ENCODE measurements at regions of chrX and their contacts with region 1.

Region 1: DNA sequence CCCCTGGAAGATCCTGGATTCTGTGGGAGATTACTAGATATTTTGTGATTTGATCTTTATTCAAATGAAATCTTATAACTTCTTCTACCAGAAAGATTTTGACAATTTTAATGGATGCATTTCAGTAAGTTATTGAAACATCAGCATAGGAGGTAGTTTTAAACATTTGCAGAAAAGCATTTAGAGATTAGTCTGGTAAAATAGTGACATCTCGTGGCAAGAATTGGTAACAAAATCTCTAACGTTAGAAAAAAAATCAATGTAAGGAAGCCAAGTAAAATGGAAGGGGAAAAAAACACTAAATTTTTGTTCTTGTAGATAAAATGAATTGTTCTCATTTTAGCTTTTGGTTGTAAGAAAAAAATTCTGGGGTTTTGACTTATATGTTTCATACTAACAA is 73.3 kb downstream of the TASL start:
- DNase-seq: no peak
- ATAC-seq: no peak

Region 2: DNA sequence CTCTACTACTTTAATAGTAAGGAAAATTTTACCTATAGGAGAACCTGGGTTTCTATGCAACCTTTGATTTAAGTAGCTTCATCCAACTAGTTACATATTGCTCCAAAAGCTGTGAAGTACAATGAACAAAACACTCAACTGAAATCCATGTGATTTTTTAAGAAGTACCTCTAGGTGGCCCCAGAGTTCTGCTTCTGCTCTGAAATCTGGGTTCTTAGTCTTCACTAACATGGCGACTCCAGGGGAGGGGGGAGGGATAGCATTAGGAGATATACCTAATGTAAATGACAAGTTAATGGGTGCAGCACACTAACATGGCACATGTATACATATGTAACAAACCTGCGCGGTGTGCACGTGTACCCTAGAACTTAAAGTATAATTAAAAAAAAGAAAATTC is 362.3 kb before region 1 on chrX:
- intact Hi-C with region 1: loop called (anchors 10 kb)
- DNase-seq: no peak
- ATAC-seq: no peak

Region 3: GRCh38 chrX:30275498-30275897 is 228.8 kb before region 1 on chrX:
- intact Hi-C with region 1: loop called (anchors 10 kb)
- DNase-seq: no peak
- ATAC-seq: no peak

Region 4: GRCh38 chrX:30402366-30402765 is 101.9 kb before region 1 on chrX:
- intact Hi-C with region 1: no loop called
- DNase-seq: no peak
- ATAC-seq: no peak